ENCODE measurements at regions of chr6 and their contacts with region 1.

Region 1: DNA sequence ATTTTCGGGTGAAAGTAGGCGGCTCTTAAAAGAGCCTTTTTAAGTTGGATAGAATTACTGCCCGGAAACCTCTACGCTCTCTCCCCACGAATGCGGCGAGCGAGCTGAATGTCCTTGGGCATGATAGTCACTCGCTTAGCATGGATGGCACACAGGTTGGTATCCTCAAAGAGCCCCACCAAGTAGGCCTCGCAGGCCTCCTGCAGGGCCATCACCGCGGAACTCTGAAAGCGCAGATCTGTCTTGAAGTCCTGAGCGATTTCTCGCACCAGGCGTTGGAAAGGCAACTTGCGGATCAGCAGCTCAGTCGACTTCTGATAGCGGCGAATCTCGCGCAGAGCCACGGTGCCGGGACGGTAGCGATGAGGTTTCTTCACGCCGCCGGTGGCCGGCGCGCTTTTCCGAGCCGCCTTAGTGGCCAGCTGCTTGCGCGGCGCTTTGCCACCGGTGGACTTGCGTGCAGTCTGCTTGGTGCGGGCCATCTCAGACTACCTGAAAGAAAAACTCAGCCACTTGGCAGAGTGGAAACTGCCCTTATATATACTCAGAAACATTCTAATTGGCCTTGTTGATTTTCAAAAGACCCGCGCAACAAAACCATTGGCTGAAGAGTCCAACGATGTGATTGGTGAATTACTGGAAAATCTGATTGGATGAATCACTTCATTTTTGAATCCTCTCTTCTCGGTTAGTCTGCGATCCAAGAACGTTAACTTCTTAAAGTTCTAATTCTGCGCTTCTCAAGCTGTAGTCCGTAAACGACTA is 93.9 kb upstream of the BTN3A2 start:
- DNase-seq: peak; percentile 50 to 89 (median 85)
- ATAC-seq: peak; percentile 24
- H3K4me3 ChIP-seq: peak overlapping the region; percentile 83
- H3K4me3 Mint-ChIP-seq: no peak overlapping the region
- H3K27ac ChIP-seq: peak overlapping the region; percentile 82
- H3K27ac Mint-ChIP-seq: peak overlapping the region in 2 of 9 donors; percentile 10 to 91
- H3K4me1 ChIP-seq: peaks cover 6 to 27% of the 10 kb centered on the region in 2 donors
- H3K4me1 Mint-ChIP-seq: peaks cover 0 to 34% (median 15%) of the 10 kb centered on the region in 7 donors
- H3K27me3 ChIP-seq: no peaks in the 10 kb centered on the region
- H3K27me3 Mint-ChIP-seq: no peaks in the 10 kb centered on the region

Region 2: DNA sequence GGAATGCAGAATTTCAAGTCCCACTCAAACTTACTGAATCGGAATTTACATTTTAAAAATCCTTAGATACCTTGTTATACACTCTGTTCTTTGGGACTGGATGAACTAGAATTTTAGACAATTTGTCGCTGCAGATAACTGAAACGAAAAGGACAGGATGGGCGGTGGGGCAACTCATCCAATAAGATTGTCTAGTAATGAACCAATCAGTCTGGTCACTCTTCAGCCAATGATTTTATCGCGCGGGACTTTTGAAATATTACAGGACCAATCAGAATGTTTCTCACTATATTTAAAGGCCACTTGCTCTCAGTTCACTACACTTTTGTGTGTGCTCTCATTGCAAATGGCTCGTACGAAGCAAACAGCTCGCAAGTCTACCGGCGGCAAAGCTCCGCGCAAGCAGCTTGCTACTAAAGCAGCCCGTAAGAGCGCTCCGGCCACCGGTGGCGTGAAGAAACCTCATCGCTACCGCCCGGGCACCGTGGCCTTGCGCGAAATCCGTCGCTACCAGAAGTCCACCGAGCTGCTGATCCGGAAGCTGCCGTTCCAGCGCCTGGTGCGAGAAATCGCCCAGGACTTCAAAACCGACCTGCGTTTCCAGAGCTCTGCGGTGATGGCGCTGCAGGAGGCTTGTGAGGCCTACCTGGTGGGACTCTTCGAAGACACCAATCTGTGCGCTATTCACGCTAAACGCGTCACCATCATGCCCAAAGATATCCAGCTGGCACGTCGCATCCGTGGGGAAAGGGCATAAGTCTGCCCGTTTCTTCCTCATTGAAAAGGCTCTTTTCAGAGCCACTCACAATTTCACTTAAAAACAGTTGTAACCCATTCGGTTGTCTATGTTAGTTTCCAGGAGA is 225.8 kb before region 1 on chr6:
- CTCF ChIA-PET with region 1: no interaction called
- POLR2A ChIA-PET with region 1: interaction called, 29 read pairs
- intact Hi-C with region 1: loop called in 1 of 2 experiments (anchors 2 kb)
- DNase-seq: peak; percentile 39 to 93 (median 89)
- ATAC-seq: peak; percentile 68
- H3K4me3 ChIP-seq: peak overlapping the region; percentile 91
- H3K4me3 Mint-ChIP-seq: peak overlapping the region; percentile 87 to 98 (median 94)
- H3K27ac ChIP-seq: peak overlapping the region; percentile 90
- H3K27ac Mint-ChIP-seq: peak overlapping the region; percentile 80 to 98 (median 95)
- H3K4me1 ChIP-seq: peaks cover 7 to 19% of the 10 kb centered on the region in 2 donors
- H3K4me1 Mint-ChIP-seq: peaks cover 8 to 51% (median 20%) of the 10 kb centered on the region in 7 donors
- H3K27me3 ChIP-seq: no peaks in the 10 kb centered on the region
- H3K27me3 Mint-ChIP-seq: peaks cover 0 to 3% (median 0%) of the 10 kb centered on the region in 5 donors

Region 3: GRCh38 chr6:26204332-26205165 is 66.5 kb before region 1 on chr6:
- CTCF ChIA-PET with region 1: interaction called, 10 read pairs
- POLR2A ChIA-PET with region 1: interaction called, 370 read pairs
- intact Hi-C with region 1: loop called (anchors 1 to 2 kb)
- DNase-seq: peak; percentile 67 to 95 (median 89)
- ATAC-seq: peak; percentile 72
- H3K4me3 ChIP-seq: peak overlapping the region; percentile 77
- H3K4me3 Mint-ChIP-seq: no peak overlapping the region
- H3K27ac ChIP-seq: peak overlapping the region; percentile 90
- H3K27ac Mint-ChIP-seq: no peak overlapping the region
- H3K4me1 ChIP-seq: peaks cover 20 to 23% of the 10 kb centered on the region in 2 donors
- H3K4me1 Mint-ChIP-seq: peaks cover 9 to 36% (median 26%) of the 10 kb centered on the region in 7 donors
- H3K27me3 ChIP-seq: no peaks in the 10 kb centered on the region
- H3K27me3 Mint-ChIP-seq: peaks cover 0 to 5% (median 0%) of the 10 kb centered on the region in 5 donors

Region 4: DNA sequence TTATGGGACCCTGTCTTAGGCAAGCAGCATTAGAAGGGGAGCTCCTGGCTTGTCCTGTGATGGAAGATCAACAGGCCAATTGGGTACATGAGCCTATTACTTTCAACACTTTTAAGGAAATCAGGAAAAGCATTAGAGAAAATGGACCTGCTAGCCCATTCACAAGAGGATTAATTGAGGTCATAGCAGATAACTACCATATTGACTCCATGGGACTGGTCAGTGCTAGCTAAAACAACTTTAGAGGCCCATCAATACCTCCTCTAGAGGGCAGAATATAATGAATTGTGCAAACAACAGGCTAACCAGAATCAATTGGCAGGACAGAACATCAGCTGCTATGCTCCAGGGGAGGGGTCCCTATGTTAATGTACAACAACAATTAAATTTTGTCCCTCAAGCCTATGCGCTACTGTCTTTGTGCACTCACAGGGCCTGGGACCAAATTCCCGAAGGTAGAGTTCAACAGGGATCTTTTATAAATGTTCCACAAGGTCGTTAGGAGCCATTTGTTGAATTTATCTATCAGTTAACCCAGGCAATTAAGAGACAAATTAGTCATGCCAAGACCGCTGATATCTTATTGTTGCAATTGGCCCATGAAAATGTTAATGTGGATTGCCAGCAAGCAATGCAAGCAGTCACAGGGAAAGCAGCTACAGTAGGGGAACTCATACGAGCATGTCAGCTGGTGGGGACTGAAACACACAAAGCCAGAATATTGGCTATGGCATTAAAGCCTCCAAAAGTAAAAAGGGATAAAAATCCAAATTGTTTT is 12.7 kb before region 1 on chr6:
- CTCF ChIA-PET with region 1: no interaction called
- POLR2A ChIA-PET with region 1: interaction called, 86 read pairs
- intact Hi-C with region 1: no loop called
- DNase-seq: no peak
- ATAC-seq: no peak
- H3K4me3 ChIP-seq: no peak overlapping the region
- H3K4me3 Mint-ChIP-seq: no peak overlapping the region
- H3K27ac ChIP-seq: no peak overlapping the region
- H3K27ac Mint-ChIP-seq: no peak overlapping the region
- H3K4me1 ChIP-seq: peaks cover 0 to 3% of the 10 kb centered on the region in 2 donors
- H3K4me1 Mint-ChIP-seq: peaks cover 6 to 23% (median 11%) of the 10 kb centered on the region in 7 donors
- H3K27me3 ChIP-seq: no peaks in the 10 kb centered on the region
- H3K27me3 Mint-ChIP-seq: no peaks in the 10 kb centered on the region

Region 5: DNA sequence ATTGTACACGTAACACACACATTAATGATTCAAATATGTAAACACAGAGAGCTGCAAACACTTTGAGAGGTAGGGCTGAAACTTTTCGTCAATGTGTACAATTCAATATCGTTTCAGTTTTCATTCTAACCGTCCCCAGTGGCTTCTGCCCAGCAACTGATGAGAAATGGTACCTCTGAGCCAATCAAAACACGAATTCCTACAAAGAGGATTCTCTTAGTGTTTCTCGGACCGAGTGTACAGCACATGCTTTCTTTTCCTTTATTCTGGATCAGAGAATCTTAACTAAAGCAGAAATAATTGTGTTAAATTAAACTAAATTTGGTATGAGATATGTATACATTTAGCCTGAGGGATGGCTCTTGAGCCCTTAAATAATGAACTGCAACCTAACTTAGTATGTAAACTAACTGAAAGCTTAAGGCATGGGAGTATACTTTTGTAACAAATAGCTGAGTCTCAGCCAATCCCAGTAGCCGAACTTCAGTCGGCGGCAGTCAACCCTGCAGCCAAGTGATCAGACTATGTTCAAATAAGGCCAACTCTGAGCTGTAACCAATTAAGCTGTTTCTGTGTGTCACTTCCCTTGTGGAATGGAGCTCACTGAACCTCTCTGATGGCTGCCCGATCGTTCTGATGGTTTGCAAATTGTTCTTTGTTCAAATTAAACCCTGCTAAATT is 202.8 kb after region 1 on chr6:
- CTCF ChIA-PET with region 1: no interaction called
- POLR2A ChIA-PET with region 1: interaction called, 11 read pairs
- intact Hi-C with region 1: no loop called
- DNase-seq: peak; percentile 37 to 94 (median 90)
- ATAC-seq: peak; percentile 96
- H3K4me3 ChIP-seq: peak overlapping the region; percentile 67
- H3K4me3 Mint-ChIP-seq: peak overlapping the region; percentile 88 to 100 (median 97)
- H3K27ac ChIP-seq: peak overlapping the region; percentile 91
- H3K27ac Mint-ChIP-seq: peak overlapping the region; percentile 98 to 100 (median 100)
- H3K4me1 ChIP-seq: peaks cover 33% of the 10 kb centered on the region in 2 donors
- H3K4me1 Mint-ChIP-seq: peaks cover 41 to 72% (median 64%) of the 10 kb centered on the region in 7 donors
- H3K27me3 ChIP-seq: no peaks in the 10 kb centered on the region
- H3K27me3 Mint-ChIP-seq: no peaks in the 10 kb centered on the region

Region 6: GRCh38 chr6:26543953-26544352 is 272.9 kb after region 1 on chr6:
- CTCF ChIA-PET with region 1: no interaction called
- POLR2A ChIA-PET with region 1: no interaction called
- intact Hi-C with region 1: no loop called
- DNase-seq: peak in 2 of 9 donors; percentile 13 to 23
- ATAC-seq: peak; percentile 68
- H3K4me3 ChIP-seq: no peak overlapping the region
- H3K4me3 Mint-ChIP-seq: peak overlapping the region in 1 of 10 donors; percentile 25
- H3K27ac ChIP-seq: no peak overlapping the region
- H3K27ac Mint-ChIP-seq: peak overlapping the region in 6 of 9 donors; percentile 4 to 74 (median 16)
- H3K4me1 ChIP-seq: peaks cover 5 to 8% of the 10 kb centered on the region in 2 donors
- H3K4me1 Mint-ChIP-seq: peaks cover 27 to 47% (median 44%) of the 10 kb centered on the region in 7 donors
- H3K27me3 ChIP-seq: no peaks in the 10 kb centered on the region
- H3K27me3 Mint-ChIP-seq: no peaks in the 10 kb centered on the region

Region 7: DNA sequence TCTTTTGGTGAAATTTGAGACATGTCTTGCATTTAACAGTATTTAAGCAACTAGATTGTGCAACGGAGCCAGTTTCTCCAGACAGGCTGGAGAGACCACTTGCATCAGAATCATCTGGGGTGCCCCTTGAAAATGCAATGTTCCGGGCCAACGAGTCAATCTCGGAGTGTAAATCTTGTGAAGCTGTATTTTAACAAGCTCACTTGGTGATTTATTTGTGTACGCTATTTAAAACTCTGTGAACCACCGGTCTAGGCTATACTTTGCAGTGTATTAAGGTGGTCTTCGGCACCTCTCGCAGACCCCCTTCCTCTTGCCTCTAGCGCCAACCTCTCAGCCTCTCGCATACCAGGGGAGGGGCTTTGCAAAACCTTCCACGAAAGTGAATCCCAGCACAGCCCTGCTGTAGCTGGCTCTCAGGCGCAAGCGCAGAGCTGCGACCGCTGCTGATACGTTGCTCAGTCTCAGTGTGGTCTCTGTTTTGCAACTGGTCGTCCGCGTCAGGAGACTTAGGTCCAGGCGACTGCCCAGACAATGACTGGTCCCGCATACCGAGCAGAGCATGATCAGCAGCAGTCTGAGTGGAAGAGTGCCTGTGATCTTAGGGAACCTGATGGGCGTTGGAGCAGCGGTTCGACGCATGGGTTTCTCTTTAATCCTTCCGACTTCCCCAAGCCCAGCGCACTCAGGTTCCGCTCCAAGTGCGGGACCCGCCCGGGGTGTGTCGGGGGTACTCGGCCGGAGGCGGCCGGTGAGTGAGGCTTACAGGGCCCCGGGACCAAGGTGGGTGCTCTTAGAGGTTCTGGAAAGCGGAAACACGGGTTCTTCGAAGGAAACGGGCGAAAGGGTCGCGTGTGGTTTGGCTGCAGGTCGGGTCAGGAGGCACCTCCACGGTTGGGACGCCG is 1117.5 kb after region 1 on chr6 and contains the start of gene ZNF391:
- CTCF ChIA-PET with region 1: no interaction called
- POLR2A ChIA-PET with region 1: no interaction called
- intact Hi-C with region 1: no loop called
- DNase-seq: peak; percentile 46 to 77 (median 67)
- ATAC-seq: peak; percentile 90
- H3K4me3 ChIP-seq: peak within 1 kb of the TSS; percentile 92
- H3K4me3 Mint-ChIP-seq: peak within 1 kb of the TSS; percentile 95 to 99 (median 98)
- H3K27ac ChIP-seq: peak within 1 kb of the TSS; percentile 78
- H3K27ac Mint-ChIP-seq: peak within 1 kb of the TSS; percentile 85 to 96 (median 93)
- H3K4me1 ChIP-seq: peaks cover 4 to 9% of the 10 kb centered on the region in 2 donors
- H3K4me1 Mint-ChIP-seq: peaks cover 9 to 31% (median 18%) of the 10 kb centered on the region in 7 donors
- H3K27me3 ChIP-seq: no peaks in the 10 kb centered on the region
- H3K27me3 Mint-ChIP-seq: peaks cover 0 to 9% (median 2%) of the 10 kb centered on the region in 5 donors
- total RNA-seq, gene ZNF391: 0.19 to 5.7 (median 3.3) TPM

Region 8: GRCh38 chr6:27864906-27865849 is 1594.1 kb after region 1 on chr6:
- CTCF ChIA-PET with region 1: no interaction called
- POLR2A ChIA-PET with region 1: interaction called, 14 read pairs
- intact Hi-C with region 1: no loop called
- DNase-seq: peak; percentile 56 to 93 (median 89)
- ATAC-seq: peak; percentile 85
- H3K4me3 ChIP-seq: peak overlapping the region; percentile 74
- H3K4me3 Mint-ChIP-seq: peak overlapping the region; percentile 85 to 99 (median 97)
- H3K27ac ChIP-seq: peak overlapping the region; percentile 71
- H3K27ac Mint-ChIP-seq: peak overlapping the region; percentile 88 to 98 (median 95)
- H3K4me1 ChIP-seq: peaks cover 8 to 25% of the 10 kb centered on the region in 2 donors
- H3K4me1 Mint-ChIP-seq: peaks cover 22 to 64% (median 46%) of the 10 kb centered on the region in 7 donors
- H3K27me3 ChIP-seq: no peaks in the 10 kb centered on the region
- H3K27me3 Mint-ChIP-seq: peaks cover 0 to 16% (median 0%) of the 10 kb centered on the region in 5 donors

Measured in naive thymus-derived CD4-positive, alpha-beta T cell (primary cell).